Esophagus muscularis mucosa (tissue), 4 donors: ENCODE measurements at regions of chr13 and their contacts with region 1.

Region 1: DNA sequence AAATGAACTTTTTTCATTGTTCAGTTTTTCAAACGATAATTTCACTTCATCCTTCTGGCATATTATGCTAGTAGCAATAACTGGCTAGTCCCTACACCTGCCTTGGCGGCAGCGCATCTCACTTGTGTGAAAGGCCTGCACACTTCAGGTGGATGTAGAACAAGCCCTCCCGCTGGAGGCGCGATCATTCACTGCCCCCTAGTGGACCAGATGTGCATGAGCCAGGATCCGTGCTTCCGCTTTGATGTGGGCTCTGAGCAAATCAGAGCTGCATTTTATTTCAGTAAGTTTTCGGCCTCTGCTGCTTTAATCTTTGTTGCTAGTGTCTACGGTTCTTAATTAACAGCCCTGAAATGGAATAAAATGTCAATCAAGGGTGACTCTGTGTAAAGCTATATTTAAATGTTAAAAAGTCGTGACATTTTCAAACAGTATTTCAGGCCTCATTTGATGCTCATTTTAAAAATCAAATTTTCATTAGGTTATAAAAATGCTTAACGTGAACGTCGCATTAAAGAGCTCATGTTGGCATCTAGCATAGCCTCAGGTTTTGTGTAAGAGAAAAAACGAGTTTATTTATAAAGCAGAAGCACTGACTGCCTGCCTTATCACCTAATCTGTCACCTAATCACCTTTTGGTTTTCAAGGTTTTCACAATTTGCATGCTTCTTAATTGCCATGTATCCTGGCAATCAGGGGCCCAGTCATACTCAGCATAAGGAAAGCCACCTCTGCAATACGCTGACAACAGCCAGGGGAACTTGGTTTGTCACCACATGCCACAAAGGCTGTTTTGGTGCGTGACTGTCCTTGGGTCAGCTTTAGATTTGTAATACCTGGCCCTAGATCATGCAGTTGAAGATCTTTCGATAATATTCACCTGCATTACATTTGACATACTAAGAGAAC is 112.2 kb downstream of the TEX26 start:
- DNase-seq: peak; percentile 97
- H3K4me3 ChIP-seq: no peak overlapping the region
- H3K27ac ChIP-seq: no peak overlapping the region
- H3K4me1 ChIP-seq: peaks cover 23 to 35% (median 30%) of the 10 kb centered on the region in 4 donors
- H3K27me3 ChIP-seq: no peaks in the 10 kb centered on the region
- CTCF ChIP-seq: peak; percentile 82 to 97 (median 89)
- EP300 ChIP-seq: no peak
- POLR2A ChIP-seq: no peak

Region 2: GRCh38 chr13:29978211-29978610 is 1066.4 kb before region 1 on chr13:
- intact Hi-C with region 1: no loop called
- DNase-seq: no peak
- H3K4me3 ChIP-seq: no peak overlapping the region
- H3K27ac ChIP-seq: no peak overlapping the region
- H3K4me1 ChIP-seq: peaks cover 0 to 7% (median 0%) of the 10 kb centered on the region in 4 donors
- H3K27me3 ChIP-seq: no peaks in the 10 kb centered on the region
- CTCF ChIP-seq: no peak
- EP300 ChIP-seq: no peak
- POLR2A ChIP-seq: no peak

Region 3: DNA sequence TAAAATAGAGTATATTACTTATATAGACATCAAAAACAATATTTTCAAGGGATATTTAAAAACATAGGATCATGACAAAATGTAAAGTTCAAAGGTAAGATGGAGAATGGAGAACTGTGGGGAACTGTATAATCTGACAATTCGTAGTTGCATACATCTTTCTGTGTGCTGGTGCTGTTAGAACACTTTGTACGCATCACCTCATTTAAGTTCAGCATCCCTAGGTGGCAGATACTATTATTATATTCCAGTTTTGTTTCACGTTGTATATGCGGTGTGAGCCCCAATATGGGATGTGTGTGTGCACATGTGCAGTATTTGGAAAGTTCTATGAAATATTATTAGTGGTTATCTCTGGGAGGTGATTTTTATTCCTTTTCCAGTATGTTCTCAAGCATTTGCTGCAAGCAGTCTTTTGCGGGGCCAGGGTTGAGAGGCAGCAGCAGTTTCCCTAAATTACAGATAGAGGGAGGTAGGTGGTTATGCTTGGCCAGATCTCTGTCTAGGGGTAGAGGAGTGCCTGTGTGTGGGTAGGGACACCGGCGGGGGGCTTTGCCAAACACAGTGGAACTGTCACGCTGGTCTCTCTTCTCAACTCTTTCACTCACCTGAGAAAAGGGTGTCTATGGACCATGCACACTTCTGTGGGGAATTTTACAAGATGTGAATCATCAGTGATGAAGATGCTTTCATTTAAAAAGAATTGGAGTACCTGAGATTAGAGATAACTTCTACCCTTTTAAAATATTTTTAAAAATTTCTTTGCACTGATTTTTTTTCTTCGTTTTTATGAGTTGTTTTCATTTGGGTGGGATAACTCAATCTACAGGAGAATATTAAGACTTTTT is 364.9 kb before region 1 on chr13:
- intact Hi-C with region 1: loop called (anchors 5 kb)
- DNase-seq: no peak
- H3K4me3 ChIP-seq: no peak overlapping the region
- H3K27ac ChIP-seq: no peak overlapping the region
- H3K4me1 ChIP-seq: peaks cover 0 to 14% (median 10%) of the 10 kb centered on the region in 4 donors
- H3K27me3 ChIP-seq: no peaks in the 10 kb centered on the region
- CTCF ChIP-seq: peak; percentile 57 to 67 (median 64)
- EP300 ChIP-seq: no peak
- POLR2A ChIP-seq: no peak

Region 4: DNA sequence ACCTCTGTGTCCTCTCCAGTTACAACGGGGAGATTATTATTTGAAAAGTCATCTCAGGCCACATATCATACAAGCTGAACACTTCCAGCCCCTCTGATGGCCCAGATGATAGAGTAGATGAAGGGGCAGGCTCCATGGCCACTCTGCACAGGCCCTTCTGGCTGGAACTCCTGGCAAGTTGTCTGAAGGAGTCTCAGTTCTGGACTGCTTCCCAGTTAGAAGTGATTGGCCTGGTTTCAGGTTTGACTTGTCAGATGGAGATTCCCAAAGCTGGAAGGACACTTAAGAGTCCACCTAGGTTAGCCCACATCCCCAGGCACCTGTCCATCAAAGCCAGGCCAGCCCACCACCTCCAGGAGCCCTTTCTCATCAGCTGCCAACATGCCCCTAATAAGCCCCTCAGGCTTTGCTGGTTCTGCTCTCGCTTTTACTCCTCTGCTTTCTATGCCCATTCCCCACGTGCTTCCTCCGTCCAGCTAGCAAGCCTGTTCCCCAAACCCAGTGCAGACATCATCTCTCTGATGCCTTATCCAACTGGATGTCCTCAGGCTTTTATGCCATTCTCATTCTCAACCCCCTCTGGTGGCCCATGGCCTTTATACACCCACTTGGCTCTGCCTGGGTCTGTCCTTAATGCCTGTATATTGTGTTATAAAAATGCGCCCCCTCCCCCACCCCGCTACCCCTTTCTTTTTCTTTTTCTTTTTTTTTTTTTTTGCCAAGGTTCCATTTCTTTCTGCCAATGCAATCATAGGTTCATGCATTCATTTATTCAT is 60.6 kb after region 1 on chr13:
- intact Hi-C with region 1: no loop called
- DNase-seq: no peak
- H3K4me3 ChIP-seq: no peak overlapping the region
- H3K27ac ChIP-seq: no peak overlapping the region
- H3K4me1 ChIP-seq: peaks cover 0 to 8% (median 0%) of the 10 kb centered on the region in 4 donors
- H3K27me3 ChIP-seq: peaks cover 0 to 8% (median 0%) of the 10 kb centered on the region in 4 donors
- CTCF ChIP-seq: no peak
- EP300 ChIP-seq: no peak
- POLR2A ChIP-seq: no peak